Activated B cell treated with CpG ODN at 0.5 μM for 24 hours (primary cell): ENCODE measurements at regions of chr1 and their contacts with region 1.

Region 1: GRCh38 chr1:167442124-167442848 is 76.0 kb downstream of the CD247 start:
- DNase-seq: peak; percentile 75
- ATAC-seq: peak; percentile 92
- H3K4me3 Mint-ChIP-seq: no peak overlapping the region
- H3K27ac Mint-ChIP-seq: no peak overlapping the region
- H3K4me1 Mint-ChIP-seq: peaks cover 35% of the 10 kb centered on the region
- H3K27me3 Mint-ChIP-seq: no peaks in the 10 kb centered on the region
- CTCF ChIP-seq: no peak

Region 2: GRCh38 chr1:167270349-167271092 is 171.8 kb before region 1 on chr1:
- CTCF ChIA-PET with region 1: interaction called, 40 read pairs
- POLR2A ChIA-PET with region 1: no interaction called
- intact Hi-C with region 1: loop called (anchors 1 kb)
- DNase-seq: no peak
- ATAC-seq: no peak
- H3K4me3 Mint-ChIP-seq: no peak overlapping the region
- H3K27ac Mint-ChIP-seq: no peak overlapping the region
- H3K4me1 Mint-ChIP-seq: peaks cover 42% of the 10 kb centered on the region
- H3K27me3 Mint-ChIP-seq: no peaks in the 10 kb centered on the region
- CTCF ChIP-seq: no peak

Region 3: GRCh38 chr1:167430134-167430856 is 12.0 kb before region 1 on chr1:
- CTCF ChIA-PET with region 1: interaction called, 18 read pairs
- POLR2A ChIA-PET with region 1: interaction called, 4 read pairs
- intact Hi-C with region 1: loop called (anchors 1 kb)
- DNase-seq: no peak
- ATAC-seq: peak; percentile 35
- H3K4me3 Mint-ChIP-seq: peak overlapping the region; percentile 61
- H3K27ac Mint-ChIP-seq: peak overlapping the region; percentile 90
- H3K4me1 Mint-ChIP-seq: peaks cover 53% of the 10 kb centered on the region
- H3K27me3 Mint-ChIP-seq: no peaks in the 10 kb centered on the region
- CTCF ChIP-seq: no peak

Region 4: GRCh38 chr1:167533851-167534300 is 91.6 kb after region 1 on chr1:
- CTCF ChIA-PET with region 1: interaction called, 38 read pairs
- POLR2A ChIA-PET with region 1: no interaction called
- intact Hi-C with region 1: loop called (anchors 1 kb)
- DNase-seq: peak; percentile 36
- ATAC-seq: peak; percentile 78
- H3K4me3 Mint-ChIP-seq: no peak overlapping the region
- H3K27ac Mint-ChIP-seq: no peak overlapping the region
- H3K4me1 Mint-ChIP-seq: peaks cover 4% of the 10 kb centered on the region
- H3K27me3 Mint-ChIP-seq: no peaks in the 10 kb centered on the region
- CTCF ChIP-seq: no peak